ENCODE measurements at regions of chr19 and their contacts with region 1.

Region 1: GRCh38 chr19:4267101-4267900 is 11.8 kb upstream of the SHD start:
- DNase-seq: peak; percentile 85
- CTCF ChIP-seq: peak; percentile 65

Region 2: GRCh38 chr19:4352701-4353121 is 85.4 kb after region 1 on chr19:
- in situ Hi-C with region 1: loop called (anchors 10 kb)
- DNase-seq: peak; percentile 81
- CTCF ChIP-seq: peak; percentile 74

Measured in GM13976 (cell line).